ENCODE measurements at regions of chr2 and their contacts with region 1.

Region 1: GRCh38 chr2:74573747-74574562 is 19.4 kb downstream of the DOK1 start:
- DNase-seq: no peak
- ATAC-seq: peak; percentile 45; the same call in 1 of the 2 replicates
- H3K4me3 ChIP-seq: no peak overlapping the region
- H3K27ac ChIP-seq: no peak overlapping the region
- H3K4me1 ChIP-seq: no peaks in the 10 kb centered on the region
- H3K27me3 ChIP-seq: no peaks in the 10 kb centered on the region
- CTCF ChIP-seq: no peak

Region 2: DNA sequence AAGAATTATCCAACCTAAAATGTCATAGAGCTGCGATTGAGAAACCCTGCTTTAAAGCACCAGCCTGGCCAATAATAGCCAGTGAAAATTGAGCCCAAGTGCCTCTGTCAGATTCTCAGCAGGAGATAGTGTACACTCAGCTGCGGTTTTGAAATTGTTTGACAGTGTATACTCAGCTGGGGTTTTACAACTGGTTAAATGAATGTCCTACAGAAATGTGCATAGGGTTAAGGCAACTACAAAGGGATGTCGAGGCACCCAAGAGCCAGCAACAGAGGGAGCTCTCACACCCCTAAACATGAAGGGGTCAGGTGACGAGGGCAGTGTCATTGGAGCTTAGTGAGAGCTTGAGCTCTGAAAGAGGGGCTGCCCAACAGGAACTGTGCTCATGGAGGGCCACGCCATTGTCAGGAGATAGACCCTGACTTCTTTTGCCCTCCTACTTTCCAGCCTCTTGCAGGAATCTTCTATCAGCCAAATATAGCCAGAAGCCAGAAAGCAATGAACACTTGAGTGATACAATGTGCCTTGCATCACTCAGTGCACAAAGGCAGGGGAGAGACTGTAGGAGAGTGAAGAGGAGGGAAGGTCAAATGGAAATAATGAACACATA is 666.0 kb before region 1 on chr2:
- CTCF ChIA-PET with region 1: no interaction called
- POLR2A ChIA-PET with region 1: no interaction called
- in situ Hi-C with region 1: no loop called
- intact Hi-C with region 1: no loop called
- DNase-seq: peak; percentile 22
- ATAC-seq: peak; percentile 75
- H3K4me3 ChIP-seq: no peak overlapping the region
- H3K27ac ChIP-seq: no peak overlapping the region
- H3K4me1 ChIP-seq: 0 out of 2 replicates have a peak, but pooled peaks cover 4% of the 10 kb centered on the region
- H3K27me3 ChIP-seq: no peaks in the 10 kb centered on the region
- CTCF ChIP-seq: no peak; the same call in 1 of the 2 replicates

Region 3: DNA sequence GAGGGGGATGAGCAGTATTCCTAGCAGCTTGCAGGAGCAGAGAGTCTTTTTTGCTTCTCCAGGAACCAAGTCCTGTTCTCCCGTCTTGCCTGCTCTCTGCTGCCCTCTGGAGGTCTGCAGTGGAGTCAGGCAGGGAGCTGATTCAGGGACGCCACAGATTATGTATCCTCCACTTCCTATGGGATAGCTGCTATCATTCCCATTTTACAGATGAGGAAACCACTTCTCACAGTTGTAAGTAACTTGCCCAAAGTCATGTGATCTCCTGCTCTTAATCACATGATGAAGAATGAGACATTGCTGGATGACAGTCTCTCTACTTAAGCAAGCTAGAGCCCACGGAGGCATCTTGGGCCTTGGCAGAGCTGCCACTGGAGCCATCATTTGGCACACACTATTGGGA is 239.0 kb before region 1 on chr2:
- CTCF ChIA-PET with region 1: no interaction called
- POLR2A ChIA-PET with region 1: no interaction called
- in situ Hi-C with region 1: no loop called
- intact Hi-C with region 1: no loop called
- DNase-seq: peak; percentile 61
- ATAC-seq: peak; percentile 94
- H3K4me3 ChIP-seq: no peak overlapping the region
- H3K27ac ChIP-seq: no peak overlapping the region
- H3K4me1 ChIP-seq: no peaks in the 10 kb centered on the region
- H3K27me3 ChIP-seq: no peaks in the 10 kb centered on the region; the same call in 1 of the 2 replicates
- CTCF ChIP-seq: peak; percentile 98

Region 4: GRCh38 chr2:74894272-74894981 is 320.5 kb after region 1 on chr2:
- CTCF ChIA-PET with region 1: no interaction called
- POLR2A ChIA-PET with region 1: interaction called, 11 read pairs
- in situ Hi-C with region 1: no loop called
- intact Hi-C with region 1: no loop called
- DNase-seq: no peak
- ATAC-seq: no peak
- H3K4me3 ChIP-seq: no peak overlapping the region
- H3K27ac ChIP-seq: no peak overlapping the region
- H3K4me1 ChIP-seq: no peaks in the 10 kb centered on the region
- H3K27me3 ChIP-seq: no peaks in the 10 kb centered on the region
- CTCF ChIP-seq: no peak

Region 5: GRCh38 chr2:75290600-75291150 is 716.7 kb after region 1 on chr2:
- CTCF ChIA-PET with region 1: no interaction called
- POLR2A ChIA-PET with region 1: no interaction called
- in situ Hi-C with region 1: no loop called
- intact Hi-C with region 1: no loop called
- DNase-seq: no peak
- ATAC-seq: no peak
- H3K4me3 ChIP-seq: no peak overlapping the region
- H3K27ac ChIP-seq: no peak overlapping the region
- H3K4me1 ChIP-seq: no peaks in the 10 kb centered on the region
- H3K27me3 ChIP-seq: no peaks in the 10 kb centered on the region
- CTCF ChIP-seq: peak; percentile 20; the same call in 1 of the 2 replicates

Measured in Panc1 (cell line).